HEK293T (cell line): ENCODE measurements at regions of chr17 and their contacts with region 1.

Region 1: DNA sequence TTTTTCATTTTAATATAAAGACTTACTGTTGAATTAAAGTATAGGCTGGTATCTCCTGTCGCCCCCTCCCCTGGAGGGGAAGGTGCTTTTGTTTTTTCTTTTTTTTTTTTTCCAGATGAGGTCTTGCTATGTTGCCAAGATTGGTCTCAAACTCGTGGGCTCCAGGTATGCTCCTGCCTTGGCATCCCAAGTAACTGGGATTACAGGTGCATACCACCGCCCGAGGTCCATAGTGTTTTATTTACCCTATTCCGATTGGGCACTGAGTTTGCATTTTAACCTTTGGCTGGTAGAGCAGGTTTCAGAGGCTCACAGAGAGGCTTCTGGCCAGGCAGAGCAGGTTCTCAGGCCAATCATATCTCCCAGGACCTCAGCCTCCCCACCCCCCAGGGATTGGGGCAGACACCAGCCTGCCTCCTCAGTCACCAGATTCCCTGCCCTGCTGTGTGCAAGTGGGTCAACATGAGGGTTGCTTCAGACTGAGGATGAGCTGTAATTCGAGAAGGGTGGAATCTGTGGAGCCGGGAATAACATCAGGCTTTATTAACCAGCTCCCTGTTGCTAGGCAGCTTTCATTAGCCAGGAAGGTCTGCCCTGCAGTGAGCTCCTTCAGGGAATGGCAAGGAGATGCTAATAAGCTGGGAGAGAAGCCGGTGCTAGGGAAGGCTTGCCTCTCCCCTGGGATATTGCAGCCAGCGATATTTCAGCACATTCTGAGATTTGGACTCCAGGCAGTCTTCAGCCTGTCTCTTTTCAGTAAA is 10.4 kb downstream of the SGSM2 start:
- DNase-seq: peak; percentile 65

Region 2: DNA sequence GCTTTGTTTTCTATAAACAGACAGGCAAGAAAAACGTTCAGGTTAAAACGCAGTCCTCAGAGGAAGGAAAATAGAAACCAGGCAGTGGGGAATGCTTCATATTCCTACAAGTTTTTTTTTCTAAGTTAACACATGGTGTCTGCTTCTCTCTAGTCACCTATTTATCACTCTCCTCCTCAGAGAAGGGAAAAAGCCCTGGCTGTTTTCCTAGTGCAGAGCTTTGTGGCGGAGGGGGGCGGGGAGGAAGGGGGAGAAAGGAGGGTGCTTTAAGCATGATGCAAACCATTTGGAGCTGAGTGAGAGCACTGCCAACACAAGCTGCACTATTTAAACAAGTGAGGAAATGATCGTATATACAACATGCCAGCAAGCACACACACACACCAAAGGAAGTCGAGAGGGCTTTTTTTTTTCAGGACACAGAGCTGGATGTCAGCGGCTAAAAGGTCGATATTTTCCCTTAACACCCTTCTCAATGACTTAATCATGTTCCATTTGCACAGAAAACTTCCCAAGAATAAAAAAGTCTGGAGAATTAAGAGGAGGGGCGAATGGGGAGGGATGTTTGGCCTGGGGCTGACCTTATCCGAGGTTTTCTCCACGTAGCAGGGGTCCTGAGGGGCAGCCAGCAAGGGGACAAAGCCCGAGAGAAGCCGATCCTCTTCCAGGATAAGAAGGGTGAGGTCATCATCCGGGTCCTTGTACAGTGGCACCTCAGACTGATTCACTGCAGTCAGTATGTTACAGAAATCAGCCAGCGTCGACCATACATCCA is 175.5 kb before region 1 on chr17:
- CTCF ChIA-PET with region 1: no interaction called
- POLR2A ChIA-PET with region 1: no interaction called
- DNase-seq: no peak

Region 3: GRCh38 chr17:2361010-2361760 is 13.5 kb after region 1 on chr17:
- CTCF ChIA-PET with region 1: interaction called, 13 read pairs
- POLR2A ChIA-PET with region 1: no interaction called
- DNase-seq: no peak